ENCODE measurements at regions of chr10 and their contacts with region 1.

Region 1: GRCh38 chr10:132654702-132655661 is 117.4 kb downstream of the INPP5A start:
- DNase-seq: peak; percentile 87
- ATAC-seq: no peak

Region 2: DNA sequence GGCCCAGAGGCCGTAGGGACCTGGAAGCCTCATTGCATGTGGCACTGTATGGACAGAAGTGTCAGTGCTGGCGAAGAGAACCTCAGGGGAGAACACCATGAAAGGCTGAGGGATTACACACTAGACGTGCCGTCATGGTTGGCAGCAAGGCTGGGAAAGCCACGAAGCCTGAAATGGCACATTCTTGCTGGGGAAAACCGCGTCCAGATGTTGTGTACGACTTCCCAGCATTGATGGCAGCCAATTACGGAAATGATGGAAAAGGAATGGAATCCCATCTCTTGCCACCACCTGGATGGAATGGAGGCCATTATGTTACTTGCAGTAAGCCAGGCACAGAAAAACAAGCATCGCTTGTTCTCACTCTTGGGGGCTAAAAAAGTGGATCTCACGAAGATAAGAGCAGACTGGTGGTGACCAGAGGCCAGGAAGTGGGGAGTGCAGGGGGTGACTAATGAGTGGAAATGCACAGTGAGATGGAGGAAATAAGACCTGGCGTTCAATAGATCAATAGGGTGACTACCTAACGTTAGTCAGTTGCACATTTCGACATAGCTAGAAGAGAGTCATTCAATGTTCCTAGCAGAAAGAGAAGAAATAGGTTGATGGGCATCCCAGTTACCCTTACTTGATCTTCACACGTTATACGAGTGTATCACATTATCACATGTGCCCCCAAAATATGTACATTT is 272.6 kb before region 1 on chr10:
- intact Hi-C with region 1: no loop called
- DNase-seq: peak; percentile 6
- ATAC-seq: no peak

Region 3: GRCh38 chr10:132452631-132453469 is 202.1 kb before region 1 on chr10:
- intact Hi-C with region 1: no loop called
- DNase-seq: peak; percentile 88
- ATAC-seq: peak; percentile 84

Region 4: DNA sequence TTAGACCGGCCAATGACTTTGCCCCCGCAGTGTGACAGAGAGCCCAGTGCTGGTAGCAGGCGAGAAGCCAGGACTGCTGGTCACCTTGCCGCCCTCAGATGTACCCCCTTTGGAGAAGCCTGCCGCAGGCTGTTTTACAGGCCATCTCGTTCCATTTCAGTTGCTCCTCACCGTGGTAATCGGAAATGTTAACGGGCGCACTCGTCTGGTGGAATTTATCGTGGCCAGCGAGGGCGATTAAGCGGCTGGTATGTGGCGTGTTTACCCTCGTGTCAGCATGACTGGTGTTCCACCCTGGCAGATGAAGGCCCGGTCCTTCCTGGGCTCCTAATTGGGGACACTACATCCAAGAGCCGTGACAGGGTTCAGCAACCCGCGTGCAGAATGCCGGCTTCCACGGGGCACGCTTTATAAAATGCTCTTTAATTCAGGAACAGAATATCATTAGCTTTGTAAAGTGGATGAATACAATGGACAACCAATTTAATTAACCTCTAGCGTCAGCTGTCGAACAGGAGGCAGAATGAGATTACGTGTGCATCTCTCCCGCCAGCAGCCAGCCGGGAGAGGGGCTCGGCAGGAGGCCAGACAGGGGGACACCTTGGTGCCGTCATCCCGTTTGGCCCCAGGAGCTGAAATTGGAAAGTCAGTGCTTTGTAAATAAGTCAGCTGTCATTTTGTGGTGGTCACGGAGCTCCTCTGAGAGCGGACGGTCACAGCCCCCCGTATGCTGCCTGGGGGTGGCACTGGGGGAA is 22.7 kb after region 1 on chr10:
- intact Hi-C with region 1: no loop called
- DNase-seq: no peak
- ATAC-seq: no peak

Region 5: GRCh38 chr10:132788180-132788830 is 133.3 kb after region 1 on chr10:
- intact Hi-C with region 1: loop called (anchors 10 kb)
- DNase-seq: no peak
- ATAC-seq: no peak

Region 6: GRCh38 chr10:132892004-132892403 is 237.0 kb after region 1 on chr10:
- intact Hi-C with region 1: loop called (anchors 10 kb)
- DNase-seq: peak; percentile 42
- ATAC-seq: peak; percentile 90

Measured in Right ventricle myocardium inferior (tissue), 1 donor.